ENCODE measurements at regions of chr11 and their contacts with region 1.

Region 1: GRCh38 chr11:4636962-4637661 is at the start of gene OR51D1:
- DNase-seq: peak; percentile 33 to 64 (median 54)
- ATAC-seq: peak; percentile 90
- H3K4me3 ChIP-seq: no peak within 1 kb of the TSS
- H3K4me3 Mint-ChIP-seq: no peak within 1 kb of the TSS
- H3K27ac ChIP-seq: no peak within 1 kb of the TSS
- H3K27ac Mint-ChIP-seq: no peak within 1 kb of the TSS
- H3K4me1 ChIP-seq: no peaks in the 10 kb centered on the region
- H3K4me1 Mint-ChIP-seq: no peaks in the 10 kb centered on the region
- H3K27me3 ChIP-seq: no peaks in the 10 kb centered on the region
- H3K27me3 Mint-ChIP-seq: peaks cover 0 to 21% (median 15%) of the 10 kb centered on the region in 5 donors
- total RNA-seq, gene OR51D1: not detected

Region 2: GRCh38 chr11:4607781-4608666 is 29.1 kb before region 1 on chr11 and contains the start of gene TRIM68:
- CTCF ChIA-PET with region 1: no interaction called
- POLR2A ChIA-PET with region 1: no interaction called
- intact Hi-C with region 1: loop called in 1 of 2 experiments (anchors 1 kb)
- DNase-seq: peak; percentile 87 to 96 (median 94)
- ATAC-seq: peak; percentile 100
- H3K4me3 ChIP-seq: peak within 1 kb of the TSS; percentile 80
- H3K4me3 Mint-ChIP-seq: peak within 1 kb of the TSS; percentile 80 to 97 (median 91)
- H3K27ac ChIP-seq: peak within 1 kb of the TSS; percentile 88
- H3K27ac Mint-ChIP-seq: peak within 1 kb of the TSS; percentile 85 to 96 (median 94)
- H3K4me1 ChIP-seq: peaks cover 15 to 22% of the 10 kb centered on the region in 2 donors
- H3K4me1 Mint-ChIP-seq: peaks cover 29 to 68% (median 56%) of the 10 kb centered on the region in 7 donors
- H3K27me3 ChIP-seq: no peaks in the 10 kb centered on the region
- H3K27me3 Mint-ChIP-seq: peaks cover 0 to 2% (median 0%) of the 10 kb centered on the region in 5 donors
- total RNA-seq, gene TRIM68: 3.8 to 29.5 (median 12.4) TPM

Region 3: DNA sequence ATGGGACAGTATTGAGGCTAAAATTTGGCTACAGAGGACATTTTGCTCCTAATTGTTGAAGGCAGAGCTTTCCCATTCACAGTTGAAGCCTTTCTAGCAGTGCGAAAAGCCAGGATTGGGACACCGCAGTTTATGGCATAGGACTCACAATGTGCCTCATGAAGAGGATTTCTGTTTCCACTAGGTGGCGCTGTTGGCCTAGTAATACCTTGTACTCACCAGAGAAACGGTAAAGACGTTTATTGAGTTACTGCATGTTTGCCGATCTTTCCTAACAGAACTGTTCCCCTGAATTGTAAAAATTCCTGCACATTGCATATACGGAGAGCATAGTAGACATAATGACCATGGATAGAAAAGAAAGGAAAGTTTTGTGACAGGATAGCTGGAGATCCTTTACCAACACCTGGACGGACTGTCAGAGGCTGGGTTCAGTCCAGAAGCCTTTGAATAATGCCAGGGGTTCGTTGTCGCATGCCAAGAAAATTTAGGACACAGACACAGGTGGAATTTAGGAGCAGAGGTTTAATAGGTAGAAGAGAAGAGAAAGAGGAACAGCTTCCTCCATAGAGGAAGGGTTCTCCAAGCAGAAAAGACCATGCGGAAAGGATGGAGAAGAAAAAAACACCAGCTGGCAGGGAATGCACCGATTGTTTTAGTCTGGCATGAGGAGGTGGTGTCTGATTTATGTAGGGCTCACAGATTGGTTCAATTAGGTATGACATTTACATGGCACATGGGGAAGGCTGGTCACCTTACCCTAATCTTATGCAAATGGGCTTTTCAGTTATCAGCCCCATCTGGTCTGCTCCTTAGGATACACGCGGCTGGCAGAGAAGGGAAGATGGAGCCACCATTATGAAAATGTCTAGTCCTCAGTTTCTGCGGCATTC is 10.7 kb before region 1 on chr11:
- CTCF ChIA-PET with region 1: interaction called, 15 read pairs
- POLR2A ChIA-PET with region 1: no interaction called
- intact Hi-C with region 1: no loop called
- DNase-seq: peak in 6 of 9 donors; percentile 8 to 57 (median 20)
- ATAC-seq: no peak
- H3K4me3 ChIP-seq: no peak overlapping the region
- H3K4me3 Mint-ChIP-seq: no peak overlapping the region
- H3K27ac ChIP-seq: no peak overlapping the region
- H3K27ac Mint-ChIP-seq: peak overlapping the region in 1 of 9 donors; percentile 26
- H3K4me1 ChIP-seq: no peaks in the 10 kb centered on the region
- H3K4me1 Mint-ChIP-seq: no peaks in the 10 kb centered on the region
- H3K27me3 ChIP-seq: no peaks in the 10 kb centered on the region
- H3K27me3 Mint-ChIP-seq: peaks cover 35 to 52% (median 43%) of the 10 kb centered on the region in 5 donors

Region 4: GRCh38 chr11:5004424-5005274 is 367.5 kb after region 1 on chr11:
- CTCF ChIA-PET with region 1: no interaction called
- POLR2A ChIA-PET with region 1: no interaction called
- intact Hi-C with region 1: loop called in 1 of 2 experiments (anchors 1 kb)
- DNase-seq: no peak
- ATAC-seq: no peak
- H3K4me3 ChIP-seq: no peak overlapping the region
- H3K4me3 Mint-ChIP-seq: no peak overlapping the region
- H3K27ac ChIP-seq: no peak overlapping the region
- H3K27ac Mint-ChIP-seq: peak overlapping the region in 1 of 9 donors; percentile 21
- H3K4me1 ChIP-seq: no peaks in the 10 kb centered on the region
- H3K4me1 Mint-ChIP-seq: no peaks in the 10 kb centered on the region
- H3K27me3 ChIP-seq: no peaks in the 10 kb centered on the region
- H3K27me3 Mint-ChIP-seq: peaks cover 0 to 22% (median 10%) of the 10 kb centered on the region in 5 donors

Region 5: DNA sequence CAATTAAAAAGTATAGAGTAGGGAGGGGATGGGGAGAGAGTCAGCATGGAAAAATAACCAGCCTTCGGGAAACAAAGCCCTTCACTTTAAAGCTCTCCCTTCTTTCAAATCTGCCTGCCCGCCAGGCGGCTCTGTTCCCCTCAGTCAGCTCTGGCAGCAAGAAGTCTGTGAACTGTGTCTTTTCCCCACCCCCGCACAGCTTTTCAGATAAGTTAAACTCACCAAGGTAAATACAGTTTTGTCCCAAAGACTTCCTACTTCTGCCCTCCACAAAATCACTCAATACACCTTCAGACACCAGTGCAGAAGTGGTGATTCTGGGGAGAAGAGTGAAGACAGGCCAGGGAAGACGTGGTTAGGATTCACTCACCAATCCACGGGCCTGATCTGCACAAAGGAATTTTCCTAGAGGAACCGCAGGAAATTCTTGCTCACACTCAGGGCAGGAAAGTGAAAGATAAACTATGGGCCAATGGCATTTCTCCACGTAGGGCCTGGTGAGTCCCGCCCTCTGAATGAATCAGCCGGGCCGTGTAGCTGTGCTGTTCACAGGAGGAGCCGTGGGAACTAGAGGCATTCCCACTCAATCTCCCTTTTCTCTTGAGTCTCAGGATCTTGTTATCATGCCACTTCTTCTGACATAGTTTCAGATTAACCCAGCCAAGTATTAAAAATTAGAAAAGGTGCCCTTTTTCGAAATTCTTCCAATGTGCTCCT is 1047.7 kb after region 1 on chr11 and contains the start of gene TRIM5:
- CTCF ChIA-PET with region 1: no interaction called
- POLR2A ChIA-PET with region 1: no interaction called
- intact Hi-C with region 1: no loop called
- DNase-seq: peak; percentile 37 to 86 (median 83)
- ATAC-seq: peak; percentile 90
- H3K4me3 ChIP-seq: peak within 1 kb of the TSS; percentile 90
- H3K4me3 Mint-ChIP-seq: peak within 1 kb of the TSS; percentile 81 to 99 (median 94)
- H3K27ac ChIP-seq: peak within 1 kb of the TSS; percentile 76
- H3K27ac Mint-ChIP-seq: peak within 1 kb of the TSS; percentile 90 to 98 (median 95)
- H3K4me1 ChIP-seq: peaks cover 9 to 23% of the 10 kb centered on the region in 2 donors
- H3K4me1 Mint-ChIP-seq: peaks cover 28 to 83% (median 66%) of the 10 kb centered on the region in 7 donors
- H3K27me3 ChIP-seq: no peaks in the 10 kb centered on the region
- H3K27me3 Mint-ChIP-seq: no peaks in the 10 kb centered on the region
- total RNA-seq, gene TRIM5: 16.9 to 36.8 (median 26.2) TPM

Region 6: DNA sequence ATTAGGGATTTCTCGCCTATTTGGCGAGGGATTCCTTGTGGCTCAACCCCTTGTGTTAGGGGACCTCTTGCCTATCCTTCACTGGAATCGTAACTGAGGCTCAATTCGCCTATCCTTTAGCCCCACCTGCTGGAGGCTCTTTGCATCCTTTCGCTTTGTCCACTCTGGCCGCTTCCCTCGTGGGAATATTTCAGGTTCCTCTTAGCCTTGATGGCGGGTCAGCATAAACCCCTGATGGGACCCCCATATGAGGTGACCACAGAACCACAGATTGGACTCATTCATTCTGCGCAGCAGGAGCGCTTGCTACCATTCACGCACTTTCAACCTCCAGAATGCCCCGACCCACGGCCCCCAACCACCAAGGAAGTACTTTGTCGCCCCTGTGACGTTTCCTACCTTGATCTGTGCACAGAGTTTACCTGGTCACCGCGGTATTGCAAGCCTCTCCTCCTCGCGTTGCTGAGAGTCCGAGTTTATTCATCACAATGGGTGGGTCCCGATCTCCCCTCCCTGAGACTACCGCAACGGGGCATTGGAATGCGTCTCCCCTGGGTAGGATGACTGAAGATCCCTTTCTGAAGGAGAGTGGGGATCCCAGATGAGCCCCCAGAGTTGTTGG is 1171.5 kb after region 1 on chr11 and contains the start of gene OR52N2:
- CTCF ChIA-PET with region 1: interaction called, 6 read pairs
- POLR2A ChIA-PET with region 1: no interaction called
- intact Hi-C with region 1: loop called in 1 of 2 experiments (anchors 5 kb)
- DNase-seq: peak; percentile 38 to 73 (median 66)
- ATAC-seq: peak; percentile 92
- H3K4me3 ChIP-seq: peak within 1 kb of the TSS; percentile 61
- H3K4me3 Mint-ChIP-seq: peak within 1 kb of the TSS; percentile 86 to 95 (median 90)
- H3K27ac ChIP-seq: no peak within 1 kb of the TSS
- H3K27ac Mint-ChIP-seq: peak within 1 kb of the TSS in 8 of 9 donors; percentile 1 to 87 (median 20)
- H3K4me1 ChIP-seq: no peaks in the 10 kb centered on the region
- H3K4me1 Mint-ChIP-seq: peaks cover 7 to 16% (median 10%) of the 10 kb centered on the region in 7 donors
- H3K27me3 ChIP-seq: peaks cover 0 to 6% of the 10 kb centered on the region in 2 donors
- H3K27me3 Mint-ChIP-seq: peaks cover 12 to 29% (median 25%) of the 10 kb centered on the region in 5 donors
- total RNA-seq, gene OR52N2: not detected

Region 7: GRCh38 chr11:5891216-5891800 is 1254.2 kb after region 1 on chr11:
- CTCF ChIA-PET with region 1: no interaction called
- POLR2A ChIA-PET with region 1: no interaction called
- intact Hi-C with region 1: loop called in 1 of 2 experiments (anchors 1 kb)
- DNase-seq: peak in 3 of 9 donors; percentile 0 to 10 (median 1)
- ATAC-seq: no peak
- H3K4me3 ChIP-seq: no peak overlapping the region
- H3K4me3 Mint-ChIP-seq: no peak overlapping the region
- H3K27ac ChIP-seq: no peak overlapping the region
- H3K27ac Mint-ChIP-seq: no peak overlapping the region
- H3K4me1 ChIP-seq: no peaks in the 10 kb centered on the region
- H3K4me1 Mint-ChIP-seq: no peaks in the 10 kb centered on the region
- H3K27me3 ChIP-seq: peaks cover 5% of the 10 kb centered on the region in 2 donors
- H3K27me3 Mint-ChIP-seq: peaks cover 7 to 27% (median 20%) of the 10 kb centered on the region in 5 donors

Measured in naive thymus-derived CD4-positive, alpha-beta T cell (primary cell).